ENCODE measurements at regions of chr5 and their contacts with region 1.

Region 1: GRCh38 chr5:172659909-172660628 is 19.0 kb downstream of the NEURL1B start:
- DNase-seq: peak; percentile 87 to 92
- H3K4me3 ChIP-seq: no peak overlapping the region
- H3K4me3 Mint-ChIP-seq: peak overlapping the region; percentile 9
- H3K27ac Mint-ChIP-seq: peak overlapping the region; percentile 83
- H3K4me1 ChIP-seq: peaks cover 27% of the 10 kb centered on the region
- H3K4me1 Mint-ChIP-seq: peaks cover 7% of the 10 kb centered on the region
- H3K27me3 ChIP-seq: no peaks in the 10 kb centered on the region
- H3K27me3 Mint-ChIP-seq: no peaks in the 10 kb centered on the region
- CTCF ChIP-seq: peak in 1 of 2 experiments; percentile 32

Region 2: DNA sequence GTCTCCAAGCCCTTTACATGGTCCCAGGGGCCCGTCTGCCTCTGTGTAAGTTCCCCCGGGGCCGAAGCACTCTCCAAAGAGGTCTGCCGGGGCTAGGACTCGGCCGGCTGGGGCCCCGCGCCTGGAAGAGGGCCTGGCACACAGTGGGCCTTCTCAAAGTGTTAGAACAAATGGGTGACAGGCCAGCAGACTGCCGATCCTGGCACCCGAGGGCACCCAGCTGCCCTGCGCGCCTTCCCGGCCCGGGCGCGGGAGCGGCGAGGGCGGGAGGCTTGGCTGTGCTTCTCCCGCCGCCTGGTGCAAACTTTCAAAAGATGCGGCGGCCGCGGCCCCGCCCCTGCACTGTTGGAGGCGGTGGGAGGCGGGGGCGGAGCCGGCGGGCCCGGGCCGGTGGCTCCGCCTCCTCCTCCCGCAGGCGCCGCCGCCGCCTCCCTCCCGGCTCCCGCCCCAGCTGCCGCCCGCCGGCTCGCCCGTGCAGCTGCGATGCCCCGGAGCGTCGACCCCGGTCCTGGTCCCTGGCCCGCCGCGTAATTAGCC is 19.2 kb before region 1 on chr5 and contains the start of gene NEURL1B:
- CTCF ChIA-PET with region 1: interaction called, 7 read pairs
- POLR2A ChIA-PET with region 1: no interaction called
- intact Hi-C with region 1: loop called (anchors 1 kb)
- DNase-seq: peak; percentile 77 to 86
- H3K4me3 ChIP-seq: peak within 1 kb of the TSS; percentile 59
- H3K4me3 Mint-ChIP-seq: peak within 1 kb of the TSS; percentile 61
- H3K27ac Mint-ChIP-seq: no peak within 1 kb of the TSS
- H3K4me1 ChIP-seq: peaks cover 6% of the 10 kb centered on the region; the same call in 1 of the 2 replicates
- H3K4me1 Mint-ChIP-seq: no peaks in the 10 kb centered on the region
- H3K27me3 ChIP-seq: no peaks in the 10 kb centered on the region
- H3K27me3 Mint-ChIP-seq: peaks cover 4% of the 10 kb centered on the region
- CTCF ChIP-seq: no peak
- total RNA-seq, gene NEURL1B: 6.0 and 7.6 TPM in 2 replicates